Activated T-helper 1 cell treated with anti-CD3 and anti-CD28 coated beads, Interleukin-12 subunit alpha, Interleukin-12 subunit beta, Interleukin-2, Interleukin-4 antibody, amounts not matched to agents 30 ng/mL and 10 ng/mL and 1 ng/mL, durations not matched to agents 14 hours and 24 hours and 36 hours (primary cell): ENCODE measurements at regions of chrX and their contacts with region 1.

Region 1: GRCh38 chrX:148282504-148282903 is 217.9 kb upstream of the AFF2 start:
- DNase-seq: no peak
- H3K4me3 Mint-ChIP-seq: no peak overlapping the region
- H3K27ac Mint-ChIP-seq: no peak overlapping the region
- H3K4me1 Mint-ChIP-seq: peaks cover 32% of the 10 kb centered on the region
- H3K27me3 Mint-ChIP-seq: no peaks in the 10 kb centered on the region

Region 2: DNA sequence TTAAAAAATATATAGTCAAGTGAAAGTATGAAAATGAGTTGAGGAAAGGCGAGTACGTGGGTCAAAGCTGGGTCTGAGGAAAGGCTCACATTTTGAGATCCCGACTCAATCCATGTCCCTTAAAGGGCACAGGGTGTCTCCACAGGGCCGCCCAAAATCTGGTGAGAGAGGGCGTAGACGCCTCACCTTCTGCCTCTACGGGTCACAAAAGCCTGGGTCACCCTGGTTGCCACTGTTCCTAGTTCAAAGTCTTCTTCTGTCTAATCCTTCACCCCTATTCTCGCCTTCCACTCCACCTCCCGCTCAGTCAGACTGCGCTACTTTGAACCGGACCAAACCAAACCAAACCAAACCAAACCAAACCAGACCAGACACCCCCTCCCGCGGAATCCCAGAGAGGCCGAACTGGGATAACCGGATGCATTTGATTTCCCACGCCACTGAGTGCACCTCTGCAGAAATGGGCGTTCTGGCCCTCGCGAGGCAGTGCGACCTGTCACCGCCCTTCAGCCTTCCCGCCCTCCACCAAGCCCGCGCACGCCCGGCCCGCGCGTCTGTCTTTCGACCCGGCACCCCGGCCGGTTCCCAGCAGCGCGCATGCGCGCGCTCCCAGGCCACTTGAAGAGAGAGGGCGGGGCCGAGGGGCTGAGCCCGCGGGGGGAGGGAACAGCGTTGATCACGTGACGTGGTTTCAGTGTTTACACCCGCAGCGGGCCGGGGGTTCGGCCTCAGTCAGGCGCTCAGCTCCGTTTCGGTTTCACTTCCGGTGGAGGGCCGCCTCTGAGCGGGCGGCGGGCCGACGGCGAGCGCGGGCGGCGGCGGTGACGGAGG is 371.1 kb before region 1 on chrX and contains the start of gene FMR1:
- intact Hi-C with region 1: loop called (anchors 10 kb)
- DNase-seq: peak; percentile 91
- H3K4me3 Mint-ChIP-seq: peak within 1 kb of the TSS; percentile 96
- H3K27ac Mint-ChIP-seq: peak within 1 kb of the TSS; percentile 92
- H3K4me1 Mint-ChIP-seq: peaks cover 37% of the 10 kb centered on the region
- H3K27me3 Mint-ChIP-seq: no peaks in the 10 kb centered on the region
- total RNA-seq, gene FMR1: 35.9 and 37.5 TPM in 2 replicates

Region 3: GRCh38 chrX:148270499-148270898 is 12.0 kb before region 1 on chrX:
- intact Hi-C with region 1: loop called (anchors 1 kb)
- DNase-seq: no peak
- H3K4me3 Mint-ChIP-seq: no peak overlapping the region
- H3K27ac Mint-ChIP-seq: peak overlapping the region; percentile 48
- H3K4me1 Mint-ChIP-seq: peaks cover 7% of the 10 kb centered on the region
- H3K27me3 Mint-ChIP-seq: no peaks in the 10 kb centered on the region

Region 4: DNA sequence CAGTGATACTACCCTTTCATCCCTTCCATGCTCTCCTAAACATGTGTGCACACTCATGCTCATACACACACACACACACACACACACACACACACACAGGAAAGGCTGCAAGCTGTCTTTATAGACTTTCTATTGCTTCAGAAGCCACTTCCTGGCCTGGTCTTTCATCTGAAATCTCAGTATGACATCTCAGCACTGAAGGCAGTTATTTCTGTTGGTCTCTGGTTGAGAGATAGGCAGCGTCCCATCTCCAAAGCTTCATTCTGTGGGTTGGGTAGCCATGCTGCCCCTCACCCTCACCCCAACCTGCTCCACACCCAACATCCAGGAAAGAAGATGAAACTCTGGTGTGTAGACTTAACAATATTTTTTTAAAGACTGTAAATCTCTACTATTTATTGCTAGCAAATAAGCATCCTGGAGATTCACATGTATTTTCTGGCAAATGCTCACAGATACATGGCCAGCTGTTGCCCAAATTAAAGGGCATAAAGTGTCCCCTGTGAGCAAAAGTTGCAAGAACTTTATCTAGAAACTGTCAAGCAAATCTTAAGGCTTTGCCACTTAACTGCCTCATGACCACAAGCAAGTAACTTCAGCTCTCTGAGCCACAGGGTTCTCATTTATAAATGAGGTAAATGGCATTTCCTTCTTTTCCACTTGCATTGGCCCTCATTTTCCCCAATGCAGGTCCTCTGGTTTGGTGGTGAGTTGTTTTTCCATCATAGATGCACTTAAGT is 28.1 kb after region 1 on chrX:
- intact Hi-C with region 1: loop called (anchors 1 kb)
- DNase-seq: peak; percentile 40
- H3K4me3 Mint-ChIP-seq: peak overlapping the region; percentile 42
- H3K27ac Mint-ChIP-seq: peak overlapping the region; percentile 78
- H3K4me1 Mint-ChIP-seq: peaks cover 34% of the 10 kb centered on the region
- H3K27me3 Mint-ChIP-seq: no peaks in the 10 kb centered on the region

Region 5: GRCh38 chrX:148466292-148466691 is 183.8 kb after region 1 on chrX:
- intact Hi-C with region 1: loop called (anchors 2 kb)
- DNase-seq: no peak
- H3K4me3 Mint-ChIP-seq: no peak overlapping the region
- H3K27ac Mint-ChIP-seq: no peak overlapping the region
- H3K4me1 Mint-ChIP-seq: peaks cover 6% of the 10 kb centered on the region
- H3K27me3 Mint-ChIP-seq: peaks cover 2% of the 10 kb centered on the region

Region 6: DNA sequence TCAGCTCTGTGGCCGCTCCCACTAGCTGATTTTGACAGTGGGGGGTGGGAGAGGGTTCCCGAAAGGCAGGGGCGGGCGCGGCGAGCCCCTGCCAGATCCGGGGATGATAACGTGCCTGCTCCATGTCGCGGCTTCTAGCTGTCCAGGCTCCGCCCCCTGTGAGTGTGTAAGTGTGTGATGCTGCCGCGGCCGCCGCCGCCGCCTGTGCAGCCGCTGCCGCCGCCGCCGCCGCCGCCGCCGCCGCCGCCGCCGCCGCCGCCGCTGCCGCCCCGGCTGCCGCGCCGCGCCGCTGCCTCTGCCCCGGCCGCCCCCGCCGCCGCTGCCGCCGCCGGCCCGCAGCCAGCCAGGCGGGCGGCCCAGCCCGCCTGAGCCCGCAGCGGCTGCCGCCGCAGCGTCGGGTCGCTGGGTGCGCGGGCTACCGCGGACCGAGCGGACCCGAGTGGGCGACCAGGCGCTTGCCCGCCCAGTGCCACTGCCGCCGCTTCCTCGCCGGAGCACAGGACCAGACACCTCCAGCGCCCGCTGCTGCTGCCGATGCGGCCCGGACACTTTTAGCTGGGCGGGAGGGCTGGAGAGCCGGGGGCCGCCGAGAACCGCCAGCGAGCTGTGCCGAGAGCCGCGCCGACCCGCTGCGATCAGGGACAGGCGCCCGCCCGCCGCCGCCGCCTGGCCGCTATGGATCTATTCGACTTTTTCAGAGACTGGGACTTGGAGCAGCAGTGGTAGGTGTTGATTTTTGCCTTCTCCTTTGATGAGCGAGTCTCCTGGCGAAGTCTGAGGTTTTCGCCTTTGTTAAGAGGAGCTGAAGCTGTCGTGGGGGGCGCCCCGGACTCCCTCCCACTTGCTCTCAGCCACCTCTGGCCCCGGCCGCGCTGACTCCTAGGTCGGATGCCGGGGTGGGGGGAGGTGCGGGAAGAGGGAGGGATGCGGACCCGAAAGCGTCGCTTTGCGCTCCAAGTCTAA is 218.2 kb after region 1 on chrX and contains the start of gene AFF2:
- intact Hi-C with region 1: loop called (anchors 5 kb)
- DNase-seq: no peak
- H3K4me3 Mint-ChIP-seq: peak within 1 kb of the TSS; percentile 85
- H3K27ac Mint-ChIP-seq: peak within 1 kb of the TSS; percentile 18
- H3K4me1 Mint-ChIP-seq: peaks cover 15% of the 10 kb centered on the region
- H3K27me3 Mint-ChIP-seq: peaks cover 13% of the 10 kb centered on the region
- total RNA-seq, gene AFF2: 1.5 and 1.8 TPM in 2 replicates

Region 7: DNA sequence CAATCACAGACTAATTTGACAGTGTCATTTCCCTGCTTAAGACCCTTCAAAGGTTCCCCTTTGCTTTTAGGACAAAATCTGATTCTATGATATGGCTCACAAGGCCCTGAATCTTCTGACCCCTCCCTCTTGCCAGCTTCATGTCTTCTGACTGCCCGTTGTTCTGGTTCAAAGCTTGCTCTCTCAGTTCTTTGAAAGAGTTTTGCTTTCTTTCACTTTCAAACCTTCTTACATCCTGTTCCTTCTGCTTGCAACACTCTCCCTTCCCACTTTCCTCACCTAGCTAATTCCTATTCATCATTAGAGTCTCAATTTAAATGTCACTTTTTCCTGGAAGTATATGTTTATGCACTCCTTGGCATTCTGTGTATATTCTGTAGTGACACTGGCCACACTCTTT is 923.4 kb after region 1 on chrX:
- intact Hi-C with region 1: no loop called
- DNase-seq: no peak
- H3K4me3 Mint-ChIP-seq: no peak overlapping the region
- H3K27ac Mint-ChIP-seq: no peak overlapping the region
- H3K4me1 Mint-ChIP-seq: peaks cover 10% of the 10 kb centered on the region
- H3K27me3 Mint-ChIP-seq: no peaks in the 10 kb centered on the region